Upper lobe of right lung (tissue), 1 donor: ENCODE measurements at regions of chr4 and their contacts with region 1.

Region 1: GRCh38 chr4:9762823-9763475 is 18.5 kb upstream of the DRD5 start:
- DNase-seq: no peak
- ATAC-seq: peak; percentile 36
- H3K4me3 ChIP-seq: no peak overlapping the region
- H3K27ac ChIP-seq: no peak overlapping the region
- H3K4me1 ChIP-seq: no peaks in the 10 kb centered on the region
- H3K27me3 ChIP-seq: no peaks in the 10 kb centered on the region
- CTCF ChIP-seq: peak; percentile 67

Region 2: DNA sequence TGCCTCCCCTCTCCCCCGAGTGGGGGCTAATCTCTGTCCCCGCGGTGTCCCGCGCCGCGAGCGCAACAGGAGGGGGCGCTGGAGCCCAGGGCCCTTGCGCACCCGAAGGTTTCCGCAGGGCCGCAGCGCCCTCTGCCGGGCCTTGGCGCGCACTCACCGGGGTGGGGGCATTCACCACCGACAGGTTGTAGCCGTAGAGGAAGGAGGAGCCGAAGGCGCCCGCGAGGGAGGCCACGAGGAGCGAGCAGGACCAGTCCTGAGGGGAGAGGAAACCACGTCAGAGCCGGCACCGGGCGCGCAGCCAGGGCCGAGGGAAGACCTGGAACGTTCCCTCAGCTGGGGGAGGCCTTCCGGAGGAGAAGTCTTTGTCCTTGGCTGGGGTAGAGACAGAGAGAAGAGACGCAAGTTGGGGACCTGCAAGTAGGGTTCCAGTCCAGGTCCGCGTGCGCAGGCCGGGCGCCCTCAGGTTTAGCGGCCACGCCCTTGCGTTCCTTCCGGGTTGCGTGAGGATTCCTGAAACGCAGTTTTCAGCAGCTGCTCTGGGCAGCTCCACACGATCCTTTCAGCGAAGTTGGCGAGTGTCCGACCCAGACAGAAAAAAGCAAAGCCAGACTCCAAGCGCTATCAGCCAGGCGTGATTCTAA is 256.0 kb after region 1 on chr4:
- intact Hi-C with region 1: loop called (anchors 5 kb)
- DNase-seq: peak; percentile 99
- ATAC-seq: peak; percentile 98
- H3K4me3 ChIP-seq: peak overlapping the region; percentile 49
- H3K27ac ChIP-seq: peak overlapping the region; percentile 86
- H3K4me1 ChIP-seq: peaks cover 34% of the 10 kb centered on the region
- H3K27me3 ChIP-seq: no peaks in the 10 kb centered on the region
- CTCF ChIP-seq: peak; percentile 99